ENCODE measurements at regions of chr1 and their contacts with region 1.

Region 1: GRCh38 chr1:21200767-21201166 is 24.1 kb upstream of the EIF4G3 start:
- DNase-seq: no peak
- H3K4me3 ChIP-seq: no peak overlapping the region
- H3K27ac ChIP-seq: no peak overlapping the region
- H3K4me1 ChIP-seq: no peaks in the 10 kb centered on the region
- H3K27me3 ChIP-seq: no peaks in the 10 kb centered on the region
- CTCF ChIP-seq: no peak
- POLR2A ChIP-seq: no peak

Region 2: DNA sequence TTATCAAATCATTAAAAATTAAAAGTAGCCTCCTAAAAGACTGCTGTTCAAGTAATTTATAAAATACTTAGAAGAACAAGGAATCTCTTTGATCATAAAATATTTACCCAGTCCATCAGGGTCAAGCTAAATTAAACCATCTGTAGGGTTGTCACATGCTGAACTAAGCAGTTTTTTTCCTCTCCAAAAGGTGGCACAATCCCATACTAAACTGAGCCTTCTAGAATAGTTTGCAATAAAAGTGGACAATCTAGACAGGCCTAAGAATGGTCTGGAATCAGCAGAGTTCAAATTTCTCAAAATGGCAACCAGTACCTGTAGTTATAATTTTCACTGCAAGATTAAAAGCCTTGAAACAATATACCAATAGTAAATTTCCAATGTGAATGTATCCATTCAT is 218.9 kb before region 1 on chr1:
- intact Hi-C with region 1: loop called (anchors 5 kb)
- DNase-seq: no peak
- H3K4me3 ChIP-seq: no peak overlapping the region
- H3K27ac ChIP-seq: no peak overlapping the region
- H3K4me1 ChIP-seq: no peaks in the 10 kb centered on the region
- H3K27me3 ChIP-seq: no peaks in the 10 kb centered on the region
- CTCF ChIP-seq: peak in 2 of 4 experiments; percentile 38 to 45
- POLR2A ChIP-seq: no peak